ENCODE measurements at regions of chr2 and their contacts with region 1.

Region 1: GRCh38 chr2:120231974-120232635 is 8.9 kb upstream of the TMEM185B start:
- DNase-seq: peak; percentile 72
- H3K4me3 ChIP-seq: peak overlapping the region; percentile 64
- H3K27ac ChIP-seq: peak overlapping the region; percentile 46
- H3K4me1 ChIP-seq: peaks cover 53% of the 10 kb centered on the region
- CTCF ChIP-seq: no peak

Region 2: GRCh38 chr2:119819846-119820245 is 412.3 kb before region 1 on chr2:
- CTCF ChIA-PET with region 1: no interaction called
- POLR2A ChIA-PET with region 1: no interaction called
- intact Hi-C with region 1: no loop called
- DNase-seq: no peak
- H3K4me3 ChIP-seq: no peak overlapping the region
- H3K27ac ChIP-seq: no peak overlapping the region
- H3K4me1 ChIP-seq: no peaks in the 10 kb centered on the region
- CTCF ChIP-seq: no peak

Region 3: GRCh38 chr2:120252225-120253021 is 20.3 kb after region 1 on chr2 and contains the start of gene RALB:
- CTCF ChIA-PET with region 1: no interaction called
- POLR2A ChIA-PET with region 1: interaction called, 8 read pairs
- intact Hi-C with region 1: loop called (anchors 1 kb)
- DNase-seq: peak; percentile 98
- H3K4me3 ChIP-seq: peak within 1 kb of the TSS; percentile 73
- H3K27ac ChIP-seq: no peak within 1 kb of the TSS
- H3K4me1 ChIP-seq: peaks cover 14% of the 10 kb centered on the region
- CTCF ChIP-seq: no peak
- total RNA-seq, gene RALB: 13.7 and 16.2 TPM in 2 replicates

Measured in OCI-LY7 (cell line).